ENCODE measurements at regions of chr2 and their contacts with region 1.

Region 1: GRCh38 chr2:154439156-154439555 is 259.3 kb upstream of the KCNJ3 start:
- DNase-seq: no peak
- ATAC-seq: no peak
- H3K4me3 ChIP-seq: no peak overlapping the region
- H3K4me3 Mint-ChIP-seq: no peak overlapping the region
- H3K27ac ChIP-seq: no peak overlapping the region
- H3K27ac Mint-ChIP-seq: no peak overlapping the region
- H3K4me1 ChIP-seq: no peaks in the 10 kb centered on the region
- H3K4me1 Mint-ChIP-seq: peaks cover 0 to 19% (median 11%) of the 10 kb centered on the region in 7 donors
- H3K27me3 ChIP-seq: no peaks in the 10 kb centered on the region
- H3K27me3 Mint-ChIP-seq: no peaks in the 10 kb centered on the region

Region 2: DNA sequence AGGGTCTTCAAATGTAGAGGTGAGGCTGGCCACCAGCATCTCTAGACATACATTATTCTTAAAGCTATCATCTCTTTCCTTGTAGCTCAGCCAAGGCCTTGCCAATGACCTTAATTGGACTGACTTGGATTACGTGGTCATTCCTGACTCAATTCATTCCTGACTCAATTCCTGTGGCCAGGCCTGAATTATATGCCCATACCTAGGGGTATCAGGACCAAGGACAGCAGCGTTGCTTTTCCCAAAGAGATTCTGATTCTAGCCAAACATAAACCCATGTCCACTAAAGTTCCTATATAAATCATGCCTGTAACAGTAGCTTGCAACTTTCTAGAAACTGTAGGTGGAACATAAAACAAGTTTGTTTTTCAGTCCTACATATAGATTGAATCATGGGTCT is 1489.0 kb before region 1 on chr2:
- CTCF ChIA-PET with region 1: no interaction called
- POLR2A ChIA-PET with region 1: no interaction called
- intact Hi-C with region 1: loop called in 1 of 2 experiments (anchors 5 kb)
- DNase-seq: no peak
- ATAC-seq: no peak
- H3K4me3 ChIP-seq: no peak overlapping the region
- H3K4me3 Mint-ChIP-seq: no peak overlapping the region
- H3K27ac ChIP-seq: no peak overlapping the region
- H3K27ac Mint-ChIP-seq: no peak overlapping the region
- H3K4me1 ChIP-seq: no peaks in the 10 kb centered on the region
- H3K4me1 Mint-ChIP-seq: peaks cover 0 to 3% (median 0%) of the 10 kb centered on the region in 7 donors
- H3K27me3 ChIP-seq: no peaks in the 10 kb centered on the region
- H3K27me3 Mint-ChIP-seq: peaks cover 0 to 11% (median 0%) of the 10 kb centered on the region in 5 donors

Region 3: DNA sequence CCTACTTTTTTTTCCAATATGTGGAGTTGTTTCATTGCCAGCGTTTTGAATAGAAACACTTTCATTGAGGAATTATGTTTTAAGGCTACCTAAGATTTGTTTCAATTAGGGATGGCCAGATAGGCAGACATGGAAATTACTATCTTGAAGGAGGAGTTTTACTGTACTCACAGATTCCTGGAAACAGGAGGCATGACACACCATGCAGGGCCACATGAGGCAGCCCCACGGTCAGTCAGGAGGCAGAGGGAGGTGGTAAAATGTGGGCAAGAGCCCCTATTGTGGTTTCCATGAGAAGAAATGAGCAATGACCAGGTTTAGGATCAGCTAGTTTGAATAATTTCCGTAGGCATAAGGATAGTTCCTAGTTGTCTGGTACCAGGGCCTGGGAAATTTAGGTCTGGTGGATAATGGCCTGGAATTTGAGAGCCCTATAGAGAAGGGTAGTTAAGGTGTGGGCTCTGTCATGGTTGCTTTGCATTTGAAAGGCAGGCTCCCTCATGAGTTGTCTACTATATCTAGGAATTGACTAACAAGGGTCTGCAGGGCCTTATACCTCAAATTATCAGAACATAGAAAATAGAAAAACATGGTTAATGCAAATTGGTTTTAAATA is 100.7 kb before region 1 on chr2:
- CTCF ChIA-PET with region 1: no interaction called
- POLR2A ChIA-PET with region 1: no interaction called
- intact Hi-C with region 1: no loop called
- DNase-seq: no peak
- ATAC-seq: no peak
- H3K4me3 ChIP-seq: no peak overlapping the region
- H3K4me3 Mint-ChIP-seq: no peak overlapping the region
- H3K27ac ChIP-seq: no peak overlapping the region
- H3K27ac Mint-ChIP-seq: no peak overlapping the region
- H3K4me1 ChIP-seq: no peaks in the 10 kb centered on the region
- H3K4me1 Mint-ChIP-seq: no peaks in the 10 kb centered on the region
- H3K27me3 ChIP-seq: no peaks in the 10 kb centered on the region
- H3K27me3 Mint-ChIP-seq: no peaks in the 10 kb centered on the region

Region 4: GRCh38 chr2:154402218-154402617 is 36.9 kb before region 1 on chr2:
- CTCF ChIA-PET with region 1: interaction called, 3 read pairs
- POLR2A ChIA-PET with region 1: no interaction called
- intact Hi-C with region 1: loop called in 1 of 2 experiments (anchors 1 kb)
- DNase-seq: peak in 4 of 9 donors; percentile 7 to 28 (median 15)
- ATAC-seq: no peak
- H3K4me3 ChIP-seq: no peak overlapping the region
- H3K4me3 Mint-ChIP-seq: no peak overlapping the region
- H3K27ac ChIP-seq: no peak overlapping the region
- H3K27ac Mint-ChIP-seq: no peak overlapping the region
- H3K4me1 ChIP-seq: no peaks in the 10 kb centered on the region
- H3K4me1 Mint-ChIP-seq: peaks cover 0 to 7% (median 0%) of the 10 kb centered on the region in 7 donors
- H3K27me3 ChIP-seq: no peaks in the 10 kb centered on the region
- H3K27me3 Mint-ChIP-seq: no peaks in the 10 kb centered on the region

Region 5: DNA sequence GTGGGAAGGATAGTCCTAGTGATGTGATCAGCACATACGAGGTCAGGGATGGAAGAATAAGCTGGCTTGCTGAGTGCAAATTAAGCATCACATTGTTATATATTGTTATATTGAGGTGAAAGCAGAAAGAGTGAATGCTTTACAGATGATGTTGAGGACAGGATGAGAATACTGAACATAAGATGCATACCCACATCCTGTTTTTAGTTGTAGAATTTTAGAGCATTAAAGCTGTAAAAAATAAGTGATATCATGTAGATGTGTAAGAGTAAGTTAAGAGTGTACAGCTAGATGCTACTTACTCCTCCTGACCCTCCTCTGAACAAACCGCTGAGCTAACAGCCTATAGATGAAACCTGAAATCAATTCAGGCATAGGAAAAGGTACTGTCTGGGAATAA is 11.7 kb before region 1 on chr2:
- CTCF ChIA-PET with region 1: interaction called, 4 read pairs
- POLR2A ChIA-PET with region 1: interaction called, 3 read pairs
- intact Hi-C with region 1: loop called in 1 of 2 experiments (anchors 1 kb)
- DNase-seq: peak in 4 of 9 donors; percentile 4 to 29 (median 16)
- ATAC-seq: peak; percentile 47
- H3K4me3 ChIP-seq: no peak overlapping the region
- H3K4me3 Mint-ChIP-seq: peak overlapping the region in 6 of 10 donors; percentile 29 to 53 (median 34)
- H3K27ac ChIP-seq: no peak overlapping the region
- H3K27ac Mint-ChIP-seq: peak overlapping the region in 7 of 9 donors; percentile 16 to 82 (median 49)
- H3K4me1 ChIP-seq: no peaks in the 10 kb centered on the region
- H3K4me1 Mint-ChIP-seq: peaks cover 0 to 32% (median 9%) of the 10 kb centered on the region in 7 donors
- H3K27me3 ChIP-seq: no peaks in the 10 kb centered on the region
- H3K27me3 Mint-ChIP-seq: no peaks in the 10 kb centered on the region

Region 6: DNA sequence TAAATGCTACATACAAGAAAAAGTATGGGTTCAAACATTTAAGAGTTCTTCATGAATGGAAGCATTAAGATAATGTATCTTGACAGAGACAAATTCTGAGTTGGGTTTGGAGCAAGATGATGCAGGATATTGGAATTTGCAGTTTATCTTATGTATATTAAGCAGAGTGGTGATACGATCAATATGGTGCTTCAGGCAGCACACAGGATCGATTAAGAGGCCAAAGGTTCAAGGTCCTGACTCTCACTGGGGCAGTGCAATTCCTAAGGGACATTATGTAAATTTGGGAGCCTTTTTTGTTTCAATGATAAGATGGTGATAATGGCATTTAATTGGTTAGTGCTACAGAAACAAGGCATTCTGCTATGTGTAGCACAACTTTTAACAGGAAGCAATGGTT is 641.2 kb after region 1 on chr2:
- CTCF ChIA-PET with region 1: no interaction called
- POLR2A ChIA-PET with region 1: no interaction called
- intact Hi-C with region 1: no loop called
- DNase-seq: no peak
- ATAC-seq: no peak
- H3K4me3 ChIP-seq: no peak overlapping the region
- H3K4me3 Mint-ChIP-seq: no peak overlapping the region
- H3K27ac ChIP-seq: no peak overlapping the region
- H3K27ac Mint-ChIP-seq: no peak overlapping the region
- H3K4me1 ChIP-seq: no peaks in the 10 kb centered on the region
- H3K4me1 Mint-ChIP-seq: no peaks in the 10 kb centered on the region
- H3K27me3 ChIP-seq: no peaks in the 10 kb centered on the region
- H3K27me3 Mint-ChIP-seq: no peaks in the 10 kb centered on the region